Endothelial cell of umbilical vein (primary cell): ENCODE measurements at regions of chr18 and their contacts with region 1.

Region 1: GRCh38 chr18:25517881-25518715 is 166.1 kb upstream of the ZNF521 start:
- DNase-seq: peak; percentile 99
- H3K4me3 ChIP-seq: no peak overlapping the region
- H3K27ac ChIP-seq: peak overlapping the region; percentile 91
- H3K4me1 ChIP-seq: peaks cover 37% of the 10 kb centered on the region
- H3K27me3 ChIP-seq: no peaks in the 10 kb centered on the region
- CTCF ChIP-seq: no peak
- POLR2A ChIP-seq: no peak

Region 2: DNA sequence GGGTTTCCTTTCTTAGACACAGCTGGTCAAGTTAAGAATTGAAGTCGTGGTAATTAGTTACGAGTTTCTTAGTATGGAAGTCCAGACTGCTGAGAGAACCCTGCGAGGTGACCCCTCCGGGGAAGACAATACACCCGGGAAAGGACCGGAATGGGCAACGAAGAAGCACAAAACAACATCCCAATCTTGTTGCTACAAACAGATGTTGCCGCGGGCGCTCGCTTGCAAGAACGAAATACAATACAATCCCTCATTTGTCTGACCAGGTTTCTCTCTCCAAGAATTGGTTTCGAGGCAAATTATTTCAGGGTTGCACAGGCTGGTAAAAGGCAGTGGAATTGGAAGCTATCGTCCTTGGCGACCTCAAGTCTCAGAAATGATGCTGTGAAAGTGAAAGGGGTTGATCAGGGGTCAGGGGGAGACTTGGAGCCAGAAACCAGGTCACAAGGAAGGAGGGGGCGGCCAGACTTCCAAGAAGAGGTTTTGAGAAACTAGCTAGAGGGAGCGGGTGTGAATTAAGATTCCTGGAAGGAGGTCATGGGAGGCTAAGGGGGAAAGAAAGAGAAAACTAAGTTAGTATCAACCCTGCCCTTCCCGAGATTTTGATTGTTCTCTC is 655.8 kb before region 1 on chr18:
- CTCF ChIA-PET with region 1: no interaction called
- POLR2A ChIA-PET with region 1: no interaction called
- dilution Hi-C with region 1: no loop called
- intact Hi-C with region 1: loop called (anchors 1 kb)
- DNase-seq: peak; percentile 63
- H3K4me3 ChIP-seq: peak overlapping the region in 1 of 3 experiments; percentile 29
- H3K27ac ChIP-seq: peak overlapping the region; percentile 89
- H3K4me1 ChIP-seq: peaks cover 32% of the 10 kb centered on the region
- H3K27me3 ChIP-seq: no peaks in the 10 kb centered on the region
- CTCF ChIP-seq: no peak
- POLR2A ChIP-seq: no peak

Region 3: GRCh38 chr18:25279133-25279532 is 239.0 kb before region 1 on chr18:
- CTCF ChIA-PET with region 1: no interaction called
- POLR2A ChIA-PET with region 1: no interaction called
- dilution Hi-C with region 1: no loop called
- intact Hi-C with region 1: loop called (anchors 1 kb)
- DNase-seq: peak; percentile 51
- H3K4me3 ChIP-seq: peak overlapping the region in 1 of 3 experiments; percentile 60
- H3K27ac ChIP-seq: peak overlapping the region; percentile 51
- H3K4me1 ChIP-seq: peaks cover 93% of the 10 kb centered on the region
- H3K27me3 ChIP-seq: no peaks in the 10 kb centered on the region
- CTCF ChIP-seq: no peak
- POLR2A ChIP-seq: no peak

Region 4: DNA sequence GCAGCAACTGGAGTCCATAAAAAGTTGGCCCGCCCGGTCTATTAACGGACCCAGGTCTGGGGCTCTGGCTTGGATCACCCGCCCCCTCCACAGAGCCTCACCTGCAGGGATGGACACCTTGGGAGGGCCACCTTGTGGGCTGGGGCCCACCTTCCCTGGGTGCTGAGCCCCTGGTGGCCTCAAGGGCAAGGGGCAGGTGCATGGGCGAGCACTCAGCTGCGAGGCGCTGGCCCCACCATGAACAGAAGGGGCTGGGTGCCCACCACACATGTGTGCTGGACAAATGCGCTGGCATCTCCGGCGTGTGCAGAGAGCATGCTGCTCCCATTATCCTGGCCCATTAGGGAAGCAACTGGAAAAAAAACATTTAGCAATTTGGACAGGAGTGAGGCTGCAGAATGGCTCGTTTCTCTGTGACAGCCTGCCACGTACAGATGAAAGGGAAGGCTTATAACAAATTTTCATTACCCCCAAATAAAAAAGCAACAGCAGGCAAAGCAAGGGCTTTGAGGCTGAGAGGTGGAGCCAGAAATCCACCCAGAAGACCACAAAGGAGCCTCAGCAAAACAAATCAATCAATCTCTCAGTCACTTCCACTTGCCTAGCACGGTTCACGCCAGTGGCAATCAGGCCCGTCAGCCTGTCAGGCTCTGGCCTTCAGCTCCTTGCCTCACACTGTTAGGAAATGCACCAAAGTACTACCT is 86.9 kb after region 1 on chr18:
- CTCF ChIA-PET with region 1: no interaction called
- POLR2A ChIA-PET with region 1: no interaction called
- dilution Hi-C with region 1: no loop called
- intact Hi-C with region 1: no loop called
- DNase-seq: no peak
- H3K4me3 ChIP-seq: no peak overlapping the region
- H3K27ac ChIP-seq: no peak overlapping the region
- H3K4me1 ChIP-seq: no peaks in the 10 kb centered on the region
- H3K27me3 ChIP-seq: peaks cover 0 to 5% of the 10 kb centered on the region in 2 experiments
- CTCF ChIP-seq: no peak
- POLR2A ChIP-seq: no peak

Region 5: GRCh38 chr18:25621144-25621543 is 103.0 kb after region 1 on chr18:
- CTCF ChIA-PET with region 1: no interaction called
- POLR2A ChIA-PET with region 1: no interaction called
- dilution Hi-C with region 1: no loop called
- intact Hi-C with region 1: loop called (anchors 2 kb)
- DNase-seq: peak; percentile 91
- H3K4me3 ChIP-seq: no peak overlapping the region
- H3K27ac ChIP-seq: no peak overlapping the region
- H3K4me1 ChIP-seq: peaks cover 9% of the 10 kb centered on the region
- H3K27me3 ChIP-seq: no peaks in the 10 kb centered on the region
- CTCF ChIP-seq: no peak
- POLR2A ChIP-seq: no peak